ENCODE measurements at regions of chr2 and their contacts with region 1.

Region 1: GRCh38 chr2:240624950-240625621 is at the start of gene GPR35:
- DNase-seq: peak; percentile 34 to 88 (median 56)
- ATAC-seq: peak; percentile 86
- H3K4me3 ChIP-seq: peak within 1 kb of the TSS; percentile 24
- H3K4me3 Mint-ChIP-seq: peak within 1 kb of the TSS; percentile 57 to 83 (median 71)
- H3K27ac ChIP-seq: peak within 1 kb of the TSS; percentile 69
- H3K27ac Mint-ChIP-seq: peak within 1 kb of the TSS; percentile 47 to 93 (median 90)
- H3K4me1 ChIP-seq: peaks cover 59 to 76% of the 10 kb centered on the region in 2 donors
- H3K4me1 Mint-ChIP-seq: peaks cover 18 to 68% (median 54%) of the 10 kb centered on the region in 7 donors
- H3K27me3 ChIP-seq: no peaks in the 10 kb centered on the region
- H3K27me3 Mint-ChIP-seq: no peaks in the 10 kb centered on the region
- total RNA-seq, gene GPR35: 7.1 to 19.0 (median 10.2) TPM

Region 2: DNA sequence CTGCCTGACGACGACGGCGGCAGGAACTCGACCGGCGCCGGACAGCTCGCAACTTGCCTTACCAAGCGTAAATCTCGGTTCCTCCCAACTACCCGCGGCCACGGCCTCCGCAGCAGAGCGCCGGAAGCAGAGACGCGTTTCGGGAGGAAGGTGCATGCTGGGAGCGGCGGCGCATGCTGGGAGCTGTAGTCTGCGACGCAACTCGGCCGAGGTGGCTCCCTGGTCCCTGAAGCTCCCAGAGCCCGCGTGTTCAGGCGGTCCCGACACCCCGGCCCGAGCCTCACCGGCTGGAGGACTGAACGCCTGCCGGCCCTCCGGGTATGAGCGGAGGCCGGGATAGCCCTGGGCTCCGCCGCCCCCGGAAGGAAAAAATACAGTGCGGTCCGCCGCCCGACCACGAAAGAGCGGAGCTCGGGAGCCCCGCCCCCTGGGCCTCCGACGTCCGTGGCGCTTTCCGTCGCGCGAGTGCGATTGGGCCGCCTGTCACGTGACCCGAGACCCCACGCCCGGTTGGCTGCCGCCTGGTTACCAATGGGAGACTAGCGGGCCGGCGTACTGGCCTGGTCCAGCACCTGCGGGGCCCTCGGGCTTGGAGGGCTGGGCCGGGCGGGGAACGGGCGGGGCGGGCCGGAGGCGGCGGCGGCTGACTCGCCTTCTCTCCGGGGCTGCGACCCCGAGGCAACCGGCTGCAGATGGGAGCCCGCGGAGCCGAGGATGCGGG is 38.7 kb before region 1 on chr2 and contains the start of gene CAPN10:
- CTCF ChIA-PET with region 1: interaction called, 6 read pairs
- POLR2A ChIA-PET with region 1: interaction called, 27 read pairs
- intact Hi-C with region 1: loop called (anchors 1 kb)
- DNase-seq: peak; percentile 93 to 98 (median 97)
- ATAC-seq: peak; percentile 92
- H3K4me3 ChIP-seq: peak within 1 kb of the TSS; percentile 89
- H3K4me3 Mint-ChIP-seq: peak within 1 kb of the TSS; percentile 82 to 97 (median 94)
- H3K27ac ChIP-seq: peak within 1 kb of the TSS; percentile 94
- H3K27ac Mint-ChIP-seq: peak within 1 kb of the TSS; percentile 90 to 97 (median 92)
- H3K4me1 ChIP-seq: peaks cover 30 to 33% of the 10 kb centered on the region in 2 donors
- H3K4me1 Mint-ChIP-seq: peaks cover 31 to 69% (median 56%) of the 10 kb centered on the region in 7 donors
- H3K27me3 ChIP-seq: no peaks in the 10 kb centered on the region
- H3K27me3 Mint-ChIP-seq: no peaks in the 10 kb centered on the region
- total RNA-seq, gene CAPN10: 54.1 to 74.8 (median 64.5) TPM

Region 3: GRCh38 chr2:240595496-240596470 is 29.3 kb before region 1 on chr2:
- CTCF ChIA-PET with region 1: no interaction called
- POLR2A ChIA-PET with region 1: interaction called, 3 read pairs
- intact Hi-C with region 1: loop called in 1 of 2 experiments (anchors 2 kb)
- DNase-seq: peak in 6 of 9 donors; percentile 15 to 45 (median 32)
- ATAC-seq: no peak
- H3K4me3 ChIP-seq: no peak overlapping the region
- H3K4me3 Mint-ChIP-seq: no peak overlapping the region
- H3K27ac ChIP-seq: no peak overlapping the region
- H3K27ac Mint-ChIP-seq: no peak overlapping the region
- H3K4me1 ChIP-seq: no peaks in the 10 kb centered on the region
- H3K4me1 Mint-ChIP-seq: peaks cover 0 to 7% (median 4%) of the 10 kb centered on the region in 7 donors
- H3K27me3 ChIP-seq: no peaks in the 10 kb centered on the region
- H3K27me3 Mint-ChIP-seq: no peaks in the 10 kb centered on the region

Region 4: GRCh38 chr2:240739797-240740196 is 114.7 kb after region 1 on chr2:
- CTCF ChIA-PET with region 1: no interaction called
- POLR2A ChIA-PET with region 1: no interaction called
- intact Hi-C with region 1: loop called in 1 of 2 experiments (anchors 2 kb)
- DNase-seq: peak in 5 of 9 donors; percentile 8 to 34 (median 18)
- ATAC-seq: peak; percentile 37
- H3K4me3 ChIP-seq: no peak overlapping the region
- H3K4me3 Mint-ChIP-seq: peak overlapping the region in 8 of 10 donors; percentile 40 to 74 (median 54)
- H3K27ac ChIP-seq: no peak overlapping the region
- H3K27ac Mint-ChIP-seq: peak overlapping the region in 6 of 9 donors; percentile 9 to 86 (median 55)
- H3K4me1 ChIP-seq: no peaks in the 10 kb centered on the region
- H3K4me1 Mint-ChIP-seq: peaks cover 0 to 10% (median 0%) of the 10 kb centered on the region in 7 donors
- H3K27me3 ChIP-seq: no peaks in the 10 kb centered on the region
- H3K27me3 Mint-ChIP-seq: no peaks in the 10 kb centered on the region